ENCODE measurements at regions of chr2 and their contacts with region 1.

Region 1: GRCh38 chr2:197191177-197191939 is 119.2 kb downstream of the ANKRD44 start:
- DNase-seq: no peak
- ATAC-seq: peak; percentile 70
- H3K4me3 Mint-ChIP-seq: no peak overlapping the region
- H3K27ac Mint-ChIP-seq: peak overlapping the region; percentile 79
- H3K4me1 Mint-ChIP-seq: peaks cover 67% of the 10 kb centered on the region
- H3K27me3 Mint-ChIP-seq: no peaks in the 10 kb centered on the region
- CTCF ChIP-seq: peak; percentile 68

Region 2: DNA sequence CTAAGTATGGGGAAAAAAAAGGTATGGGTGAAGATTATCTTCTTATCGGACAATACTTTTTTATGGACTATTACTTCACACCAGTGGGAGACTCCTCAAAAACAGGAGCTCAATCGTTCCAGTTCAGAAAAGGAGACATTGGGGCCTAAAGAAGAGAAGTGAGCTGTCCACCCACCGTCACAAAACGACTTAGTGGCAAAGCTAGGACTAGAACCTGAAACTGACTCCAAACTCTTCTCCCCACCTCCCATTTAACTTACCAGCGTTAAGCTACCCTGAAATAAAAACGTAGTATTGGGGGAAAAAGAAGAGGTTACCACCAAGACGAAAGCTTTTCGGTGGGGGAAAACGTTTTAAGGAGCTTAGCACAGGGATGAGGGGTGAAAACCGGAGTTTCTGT is 392.4 kb before region 1 on chr2:
- CTCF ChIA-PET with region 1: no interaction called
- POLR2A ChIA-PET with region 1: no interaction called
- intact Hi-C with region 1: loop called (anchors 10 kb)
- DNase-seq: no peak
- ATAC-seq: no peak
- H3K4me3 Mint-ChIP-seq: peak overlapping the region; percentile 97
- H3K27ac Mint-ChIP-seq: peak overlapping the region; percentile 92
- H3K4me1 Mint-ChIP-seq: peaks cover 18% of the 10 kb centered on the region
- H3K27me3 Mint-ChIP-seq: peaks cover 7% of the 10 kb centered on the region
- CTCF ChIP-seq: no peak

Region 3: DNA sequence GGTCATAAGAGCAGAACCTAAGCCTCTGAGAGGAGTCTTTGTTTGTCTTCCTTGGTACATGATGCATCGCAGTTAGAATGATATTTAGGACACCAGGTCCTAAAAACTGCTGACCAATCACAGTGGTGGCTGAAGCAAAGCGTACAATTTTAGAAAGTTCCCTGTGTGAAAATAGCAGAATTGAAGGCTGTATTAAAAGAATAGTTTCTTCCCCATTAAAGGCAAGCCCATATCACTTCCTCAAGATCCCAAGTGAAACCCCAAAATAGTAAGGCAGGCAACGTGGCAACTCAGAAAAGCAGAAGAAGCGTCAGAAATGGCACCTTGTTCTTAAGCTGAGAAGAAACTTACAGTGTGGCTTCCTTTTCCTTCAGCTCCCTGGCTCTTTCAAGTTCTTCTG is 110.1 kb before region 1 on chr2:
- CTCF ChIA-PET with region 1: no interaction called
- POLR2A ChIA-PET with region 1: no interaction called
- intact Hi-C with region 1: no loop called
- DNase-seq: no peak
- ATAC-seq: no peak
- H3K4me3 Mint-ChIP-seq: no peak overlapping the region
- H3K27ac Mint-ChIP-seq: peak overlapping the region; percentile 51
- H3K4me1 Mint-ChIP-seq: peaks cover 9% of the 10 kb centered on the region
- H3K27me3 Mint-ChIP-seq: no peaks in the 10 kb centered on the region
- CTCF ChIP-seq: no peak

Region 4: GRCh38 chr2:197152451-197153228 is 38.7 kb before region 1 on chr2:
- CTCF ChIA-PET with region 1: interaction called, 6 read pairs
- POLR2A ChIA-PET with region 1: no interaction called
- intact Hi-C with region 1: loop called (anchors 1 kb)
- DNase-seq: no peak
- ATAC-seq: peak; percentile 84
- H3K4me3 Mint-ChIP-seq: peak overlapping the region; percentile 79
- H3K27ac Mint-ChIP-seq: peak overlapping the region; percentile 97
- H3K4me1 Mint-ChIP-seq: peaks cover 97% of the 10 kb centered on the region
- H3K27me3 Mint-ChIP-seq: no peaks in the 10 kb centered on the region
- CTCF ChIP-seq: no peak

Region 5: DNA sequence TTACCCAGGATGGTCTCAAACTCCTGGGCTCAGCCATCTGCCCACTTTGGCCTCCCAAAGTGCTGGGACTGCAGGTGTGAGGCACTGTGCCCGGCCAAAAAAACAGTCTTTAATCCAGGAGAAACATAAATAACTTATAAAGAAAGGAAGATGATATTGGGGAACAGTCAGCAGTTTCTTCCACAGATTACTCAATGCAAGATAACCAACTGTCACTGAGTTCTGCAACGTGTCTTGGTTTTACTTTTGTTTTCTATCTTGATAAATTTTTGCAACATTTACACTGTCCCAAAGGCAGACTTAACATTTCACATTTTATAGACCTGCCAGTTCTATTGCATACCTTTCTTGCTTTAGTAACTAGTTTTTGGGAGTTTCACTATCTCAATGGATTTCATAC is 48.1 kb after region 1 on chr2:
- CTCF ChIA-PET with region 1: interaction called, 3 read pairs
- POLR2A ChIA-PET with region 1: interaction called, 5 read pairs
- intact Hi-C with region 1: loop called (anchors 2 kb)
- DNase-seq: no peak
- ATAC-seq: peak; percentile 45
- H3K4me3 Mint-ChIP-seq: peak overlapping the region; percentile 76
- H3K27ac Mint-ChIP-seq: peak overlapping the region; percentile 91
- H3K4me1 Mint-ChIP-seq: peaks cover 87% of the 10 kb centered on the region
- H3K27me3 Mint-ChIP-seq: no peaks in the 10 kb centered on the region
- CTCF ChIP-seq: no peak

Region 6: DNA sequence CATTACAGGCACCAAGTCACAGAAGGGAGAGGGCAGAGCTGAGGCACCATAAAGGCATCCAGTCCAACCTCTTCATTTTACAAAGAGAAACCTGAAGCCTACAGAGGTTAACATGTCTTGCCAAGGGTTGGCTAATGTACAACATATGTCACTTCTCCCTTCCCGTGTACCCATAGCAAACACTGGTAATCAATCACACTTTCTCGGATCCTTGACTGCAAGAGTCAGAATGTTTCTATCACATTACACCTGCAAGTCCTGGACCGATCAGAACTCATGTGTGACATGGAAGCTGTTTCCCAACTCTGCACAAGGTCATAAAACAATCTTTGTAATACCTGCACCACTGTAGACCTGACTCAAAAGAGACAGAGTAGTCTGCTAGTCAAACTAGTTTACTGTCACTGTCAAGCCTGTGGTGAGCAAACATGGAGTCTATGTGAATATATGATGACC is 113.2 kb after region 1 on chr2:
- CTCF ChIA-PET with region 1: interaction called, 110 read pairs
- POLR2A ChIA-PET with region 1: interaction called, 134 read pairs
- intact Hi-C with region 1: no loop called
- DNase-seq: no peak
- ATAC-seq: peak; percentile 5
- H3K4me3 Mint-ChIP-seq: peak overlapping the region; percentile 74
- H3K27ac Mint-ChIP-seq: peak overlapping the region; percentile 95
- H3K4me1 Mint-ChIP-seq: peaks cover 93% of the 10 kb centered on the region
- H3K27me3 Mint-ChIP-seq: no peaks in the 10 kb centered on the region
- CTCF ChIP-seq: no peak

Region 7: DNA sequence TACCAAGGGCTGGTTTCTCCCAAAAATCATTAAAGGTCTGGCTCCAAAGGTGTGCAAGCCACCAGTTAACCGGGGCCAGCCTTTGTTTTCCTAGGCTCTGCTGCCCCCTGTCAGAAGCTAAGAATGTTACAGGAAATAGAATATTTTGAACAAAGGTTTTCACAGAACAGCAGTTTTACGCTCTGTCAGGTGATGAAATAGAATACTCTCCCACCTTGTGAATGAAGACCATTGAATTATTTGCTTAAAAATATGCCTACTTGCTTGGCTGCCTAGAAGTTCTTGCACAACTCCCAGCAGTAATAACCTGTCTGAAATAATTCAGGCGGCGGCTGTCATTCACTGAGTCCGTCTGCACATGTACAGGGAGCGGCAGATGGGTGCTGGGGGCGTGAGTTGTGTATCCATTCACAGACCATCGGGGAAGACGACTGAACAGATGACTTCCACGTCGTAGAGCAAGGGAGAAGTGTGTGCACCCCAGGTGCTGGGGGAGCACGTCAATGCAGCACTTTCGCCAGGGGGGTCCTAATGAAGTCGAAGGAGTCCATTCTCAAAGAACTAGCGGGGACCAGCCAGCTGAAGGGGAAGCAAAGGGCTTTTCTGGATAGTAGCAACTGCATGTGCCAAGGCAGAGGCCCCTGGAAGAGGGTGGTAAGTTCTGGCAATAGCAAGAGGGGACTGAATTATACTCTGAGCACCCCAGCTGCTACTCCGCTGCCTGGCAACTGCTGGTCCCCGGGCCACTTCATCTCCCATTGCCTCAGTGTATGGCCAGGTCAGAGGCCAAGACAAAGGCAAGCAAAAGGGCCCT is 187.3 kb after region 1 on chr2:
- CTCF ChIA-PET with region 1: interaction called, 4 read pairs
- POLR2A ChIA-PET with region 1: no interaction called
- intact Hi-C with region 1: loop called (anchors 1 kb)
- DNase-seq: peak; percentile 29
- ATAC-seq: peak; percentile 66
- H3K4me3 Mint-ChIP-seq: no peak overlapping the region
- H3K27ac Mint-ChIP-seq: no peak overlapping the region
- H3K4me1 Mint-ChIP-seq: peaks cover 11% of the 10 kb centered on the region
- H3K27me3 Mint-ChIP-seq: no peaks in the 10 kb centered on the region
- CTCF ChIP-seq: peak; percentile 43

Region 8: DNA sequence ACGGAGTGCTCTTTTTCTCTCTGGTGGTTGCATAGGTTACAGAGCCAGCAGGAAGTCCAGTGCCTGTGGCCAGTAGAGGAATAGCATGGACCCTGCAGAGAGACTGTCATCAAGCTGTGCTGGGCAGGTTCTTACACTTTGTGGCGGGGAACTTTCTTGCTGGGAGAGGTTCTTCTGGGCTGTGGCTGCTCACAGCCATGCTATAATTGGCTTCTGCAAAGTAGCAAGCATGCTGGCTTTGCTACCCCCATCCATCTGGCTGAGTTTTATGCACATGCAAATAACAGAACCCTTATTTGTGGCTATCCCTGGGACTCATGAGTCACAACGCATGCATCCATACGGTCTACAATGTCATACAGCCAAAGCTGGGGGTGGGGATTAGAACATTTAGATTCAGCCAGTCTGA is 681.9 kb after region 1 on chr2:
- CTCF ChIA-PET with region 1: no interaction called
- POLR2A ChIA-PET with region 1: no interaction called
- intact Hi-C with region 1: no loop called
- DNase-seq: no peak
- ATAC-seq: no peak
- H3K4me3 Mint-ChIP-seq: no peak overlapping the region
- H3K27ac Mint-ChIP-seq: no peak overlapping the region
- H3K4me1 Mint-ChIP-seq: no peaks in the 10 kb centered on the region
- H3K27me3 Mint-ChIP-seq: no peaks in the 10 kb centered on the region
- CTCF ChIP-seq: no peak

Measured in activated B cell treated with CpG ODN at 0.5 μM for 24 hours (primary cell).